Mammary epithelial cell (primary cell): ENCODE measurements at regions of chr12 and their contacts with region 1.

Region 1: GRCh38 chr12:48838048-48838447 is 13.9 kb downstream of the DDX23 start:
- DNase-seq: no peak
- H3K4me3 ChIP-seq: no peak overlapping the region
- H3K27ac ChIP-seq: no peak overlapping the region
- H3K4me1 ChIP-seq: no peaks in the 10 kb centered on the region
- H3K27me3 ChIP-seq: no peaks in the 10 kb centered on the region
- CTCF ChIP-seq: no peak

Region 2: DNA sequence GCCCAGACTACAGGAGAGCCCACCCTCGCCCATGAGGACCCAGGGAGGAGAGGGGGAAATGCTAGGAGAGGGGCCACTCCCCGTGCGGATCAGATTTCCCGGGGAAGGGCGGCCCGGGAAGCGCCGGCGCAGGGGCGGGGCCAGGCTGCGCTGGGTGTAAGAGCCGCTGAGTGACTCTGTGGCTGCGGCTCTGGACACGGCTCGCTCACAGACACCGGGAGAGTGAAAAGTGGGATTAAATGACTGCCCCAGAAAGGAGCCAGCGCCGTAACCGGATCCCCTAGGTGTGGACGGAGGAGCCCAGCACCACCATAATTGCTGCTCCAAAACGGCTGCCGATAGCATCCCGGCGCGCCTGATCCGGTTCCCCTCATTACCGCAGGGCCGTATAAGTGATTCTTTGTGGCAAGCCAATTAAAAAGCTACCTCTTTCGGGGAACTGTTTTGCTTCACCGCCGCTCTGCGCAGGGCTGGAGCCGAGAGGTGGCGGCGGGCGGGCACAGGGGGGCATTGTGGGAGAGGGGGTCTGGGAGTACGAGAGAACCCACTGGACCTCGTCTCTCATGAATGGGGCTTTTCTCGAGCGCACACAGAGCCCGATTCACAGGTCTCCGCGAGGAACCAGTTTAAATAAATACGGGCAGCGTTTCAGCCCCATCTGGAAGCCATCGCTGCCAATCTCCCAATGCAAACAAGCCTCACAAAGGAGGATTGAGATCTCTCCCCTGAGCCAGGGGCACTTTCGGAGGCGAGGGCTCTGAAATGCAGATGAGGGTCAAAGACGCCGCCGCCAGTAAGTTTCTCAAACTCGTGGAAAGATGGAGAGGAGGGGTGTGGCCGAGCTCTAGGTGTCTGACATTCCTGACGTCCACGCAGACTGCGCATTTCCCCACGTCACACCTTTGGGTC is 836.3 kb before region 1 on chr12:
- CTCF ChIA-PET with region 1: no interaction called
- dilution Hi-C with region 1: no loop called
- in situ Hi-C with region 1: no loop called
- intact Hi-C with region 1: no loop called
- DNase-seq: peak; percentile 64
- H3K4me3 ChIP-seq: peak overlapping the region; percentile 43 to 74 (median 54)
- H3K27ac ChIP-seq: peak overlapping the region; percentile 78
- H3K4me1 ChIP-seq: peaks cover 25% of the 10 kb centered on the region
- H3K27me3 ChIP-seq: peaks cover 12% of the 10 kb centered on the region
- CTCF ChIP-seq: no peak

Region 3: GRCh38 chr12:48556631-48557030 is 281.4 kb before region 1 on chr12:
- CTCF ChIA-PET with region 1: no interaction called
- dilution Hi-C with region 1: no loop called
- in situ Hi-C with region 1: no loop called
- intact Hi-C with region 1: no loop called
- DNase-seq: no peak
- H3K4me3 ChIP-seq: no peak overlapping the region
- H3K27ac ChIP-seq: no peak overlapping the region
- H3K4me1 ChIP-seq: no peaks in the 10 kb centered on the region
- H3K27me3 ChIP-seq: no peaks in the 10 kb centered on the region
- CTCF ChIP-seq: no peak

Region 4: DNA sequence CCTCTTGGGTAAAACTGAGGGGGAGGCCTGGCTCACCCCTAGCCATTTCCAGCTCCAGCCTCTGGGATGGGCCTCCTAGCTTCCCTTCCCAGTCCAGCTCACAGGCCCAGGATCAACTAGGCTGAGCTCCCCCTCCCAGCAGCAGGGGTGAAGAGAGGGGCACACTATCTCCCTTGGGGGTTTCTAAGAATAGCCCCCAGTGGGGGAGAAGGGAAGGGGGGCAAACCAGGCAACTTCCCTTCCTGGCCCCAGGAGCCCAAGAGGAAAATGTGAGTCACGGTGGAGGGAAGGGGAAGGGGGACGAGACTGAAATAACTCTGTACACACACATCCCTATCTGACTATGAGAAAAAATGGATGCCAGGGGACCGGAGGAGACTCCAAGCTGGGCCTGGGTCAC is 58.2 kb before region 1 on chr12:
- CTCF ChIA-PET with region 1: no interaction called
- dilution Hi-C with region 1: loop called (anchors 5 kb)
- in situ Hi-C with region 1: no loop called
- intact Hi-C with region 1: no loop called
- DNase-seq: no peak
- H3K4me3 ChIP-seq: no peak overlapping the region
- H3K27ac ChIP-seq: no peak overlapping the region
- H3K4me1 ChIP-seq: no peaks in the 10 kb centered on the region
- H3K27me3 ChIP-seq: no peaks in the 10 kb centered on the region
- CTCF ChIP-seq: no peak

Region 5: DNA sequence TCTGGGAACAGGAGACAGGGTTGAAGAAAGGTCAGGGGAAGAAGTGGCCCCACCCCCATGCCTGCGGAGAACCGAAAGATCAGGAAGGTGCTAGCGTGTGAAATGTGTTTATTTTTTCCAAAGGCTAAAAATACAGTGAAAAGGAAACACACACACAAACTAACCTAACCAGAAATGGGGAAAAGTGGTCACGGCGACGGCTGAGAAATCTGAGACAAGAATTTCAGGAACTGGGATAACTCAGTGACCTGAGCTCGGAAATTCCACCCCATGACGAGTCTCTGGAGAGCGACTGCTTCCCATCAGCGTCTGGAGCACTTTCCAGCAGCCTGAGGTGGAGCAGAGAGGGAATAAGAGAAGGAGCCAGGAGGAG is 44.3 kb after region 1 on chr12:
- CTCF ChIA-PET with region 1: no interaction called
- dilution Hi-C with region 1: loop called (anchors 5 kb)
- in situ Hi-C with region 1: no loop called
- intact Hi-C with region 1: no loop called
- DNase-seq: no peak
- H3K4me3 ChIP-seq: no peak overlapping the region
- H3K27ac ChIP-seq: no peak overlapping the region
- H3K4me1 ChIP-seq: no peaks in the 10 kb centered on the region
- H3K27me3 ChIP-seq: no peaks in the 10 kb centered on the region
- CTCF ChIP-seq: no peak

Region 6: DNA sequence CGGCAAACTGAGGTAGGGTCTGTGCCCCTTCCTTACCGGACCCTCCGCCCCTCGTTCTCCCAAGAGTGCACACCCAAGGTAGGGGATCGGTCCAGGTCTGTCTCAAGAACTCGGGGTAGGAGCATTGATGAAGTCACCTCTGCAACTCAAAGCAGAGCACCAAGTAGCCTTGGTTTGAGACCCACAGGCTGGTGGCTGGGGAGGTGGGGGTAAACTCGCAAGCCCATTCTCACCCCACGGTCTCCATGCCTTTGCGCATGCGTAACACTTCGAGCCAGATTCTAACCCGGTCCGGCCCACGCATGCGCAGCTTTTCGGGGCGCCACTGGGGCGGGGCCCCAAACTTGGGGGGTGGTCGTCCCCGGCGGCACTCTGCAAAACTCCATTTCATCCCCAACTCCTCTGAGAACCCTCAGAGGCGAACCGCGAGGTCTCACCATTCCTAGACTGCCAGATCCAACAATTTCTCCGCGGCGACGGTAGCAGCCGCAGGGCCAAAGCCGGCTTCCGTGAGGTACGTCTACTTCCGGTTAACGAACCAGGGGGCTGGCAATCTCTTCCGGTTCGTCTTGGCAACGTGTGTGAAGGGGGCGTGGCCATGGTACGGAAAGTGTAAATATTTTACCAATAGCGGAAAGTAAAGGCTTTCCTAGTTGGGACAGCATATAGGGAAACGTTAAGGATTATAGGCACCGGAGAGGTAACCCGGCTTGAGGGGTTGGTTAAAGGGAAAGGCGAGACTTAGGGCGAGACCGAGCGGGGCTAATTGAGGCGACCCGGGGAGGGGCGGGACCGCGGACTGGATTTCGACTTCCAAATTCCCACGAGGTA is 729.8 kb after region 1 on chr12 and contains the start of gene MCRS1:
- CTCF ChIA-PET with region 1: no interaction called
- dilution Hi-C with region 1: no loop called
- in situ Hi-C with region 1: no loop called
- intact Hi-C with region 1: no loop called
- DNase-seq: peak; percentile 83
- H3K4me3 ChIP-seq: peak within 1 kb of the TSS; percentile 78 to 90 (median 83)
- H3K27ac ChIP-seq: peak within 1 kb of the TSS; percentile 80
- H3K4me1 ChIP-seq: peaks cover 10% of the 10 kb centered on the region
- H3K27me3 ChIP-seq: no peaks in the 10 kb centered on the region
- CTCF ChIP-seq: no peak
- total RNA-seq, gene MCRS1: 43.8 to 59.5 TPM